GM18951 (cell line): ENCODE measurements at regions of chr6 and their contacts with region 1.

Region 1: GRCh38 chr6:161370880-161371279 is 97.0 kb upstream of the AGPAT4 start:
- POLR2A ChIP-seq: no peak

Region 2: GRCh38 chr6:160742090-160742489 is 628.8 kb before region 1 on chr6:
- in situ Hi-C with region 1: loop called (anchors 10 kb)
- POLR2A ChIP-seq: no peak

Region 3: GRCh38 chr6:160930547-160931377 is 440.1 kb before region 1 on chr6:
- in situ Hi-C with region 1: loop called (anchors 10 kb)
- POLR2A ChIP-seq: no peak